Esophagus muscularis mucosa (tissue), 4 donors: ENCODE measurements at regions of chr6 and their contacts with region 1.

Region 1: DNA sequence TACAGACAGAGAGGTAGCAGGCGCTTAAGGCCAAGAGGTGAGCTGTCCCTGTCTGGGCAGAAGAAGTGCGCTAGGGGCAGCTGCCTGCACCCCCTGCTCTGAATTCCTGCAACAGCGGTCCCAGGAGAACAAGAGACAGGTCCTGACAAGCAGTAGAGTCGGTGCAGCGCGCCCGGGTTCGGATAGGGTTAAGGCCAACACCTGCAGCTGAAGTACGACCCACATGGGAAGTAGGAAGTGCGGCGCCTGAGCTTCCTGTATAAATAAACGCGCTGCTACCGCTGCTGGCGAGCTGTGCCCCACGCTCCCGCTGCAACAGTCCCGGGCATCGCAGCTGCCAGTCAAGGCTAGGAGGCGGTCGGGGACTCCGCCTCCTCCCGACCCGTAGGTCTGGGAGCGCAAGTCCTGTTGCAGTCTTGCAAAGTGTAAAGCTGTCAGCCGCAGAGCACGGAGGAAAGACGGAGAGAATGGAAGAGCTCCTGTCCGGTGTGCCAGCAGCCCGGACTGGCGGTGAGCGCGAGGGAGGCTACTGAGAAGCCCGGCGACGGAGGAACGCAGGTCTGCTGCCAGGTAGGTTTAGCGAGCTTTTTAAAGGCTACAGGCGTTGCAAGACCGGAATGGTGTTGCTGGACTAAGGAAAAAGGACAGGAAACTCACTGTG is at the start of gene RNF144B:
- DNase-seq: peak; percentile 95
- H3K4me3 ChIP-seq: peak within 1 kb of the TSS; percentile 53 to 73 (median 62)
- H3K27ac ChIP-seq: peak within 1 kb of the TSS; percentile 63 to 82 (median 72)
- H3K4me1 ChIP-seq: peaks cover 19 to 45% (median 42%) of the 10 kb centered on the region in 4 donors
- H3K27me3 ChIP-seq: no peaks in the 10 kb centered on the region
- CTCF ChIP-seq: no peak
- EP300 ChIP-seq: no peak
- POLR2A ChIP-seq: peak; percentile 30
- total RNA-seq, gene RNF144B: 6.6 to 20.0 (median 12.1) TPM

Region 2: GRCh38 chr6:18264219-18264922 is 122.8 kb before region 1 on chr6 and contains the start of gene DEK:
- intact Hi-C with region 1: loop called (anchors 5 kb)
- DNase-seq: peak; percentile 96
- H3K4me3 ChIP-seq: peak within 1 kb of the TSS; percentile 82 to 98 (median 94)
- H3K27ac ChIP-seq: peak within 1 kb of the TSS; percentile 96 to 99 (median 98)
- H3K4me1 ChIP-seq: peaks cover 33 to 42% (median 38%) of the 10 kb centered on the region in 4 donors
- H3K27me3 ChIP-seq: no peaks in the 10 kb centered on the region
- CTCF ChIP-seq: peak; percentile 44 to 76 (median 47)
- EP300 ChIP-seq: no peak
- POLR2A ChIP-seq: peak; percentile 14
- total RNA-seq, gene DEK: 134 to 189 (median 142) TPM

Region 3: GRCh38 chr6:18323935-18324705 is 63.1 kb before region 1 on chr6:
- intact Hi-C with region 1: loop called (anchors 10 kb)
- DNase-seq: no peak
- H3K4me3 ChIP-seq: no peak overlapping the region
- H3K27ac ChIP-seq: no peak overlapping the region
- H3K4me1 ChIP-seq: peaks cover 0 to 15% (median 10%) of the 10 kb centered on the region in 4 donors
- H3K27me3 ChIP-seq: no peaks in the 10 kb centered on the region
- CTCF ChIP-seq: peak; percentile 72 to 74 (median 73)
- EP300 ChIP-seq: no peak
- POLR2A ChIP-seq: no peak

Region 4: DNA sequence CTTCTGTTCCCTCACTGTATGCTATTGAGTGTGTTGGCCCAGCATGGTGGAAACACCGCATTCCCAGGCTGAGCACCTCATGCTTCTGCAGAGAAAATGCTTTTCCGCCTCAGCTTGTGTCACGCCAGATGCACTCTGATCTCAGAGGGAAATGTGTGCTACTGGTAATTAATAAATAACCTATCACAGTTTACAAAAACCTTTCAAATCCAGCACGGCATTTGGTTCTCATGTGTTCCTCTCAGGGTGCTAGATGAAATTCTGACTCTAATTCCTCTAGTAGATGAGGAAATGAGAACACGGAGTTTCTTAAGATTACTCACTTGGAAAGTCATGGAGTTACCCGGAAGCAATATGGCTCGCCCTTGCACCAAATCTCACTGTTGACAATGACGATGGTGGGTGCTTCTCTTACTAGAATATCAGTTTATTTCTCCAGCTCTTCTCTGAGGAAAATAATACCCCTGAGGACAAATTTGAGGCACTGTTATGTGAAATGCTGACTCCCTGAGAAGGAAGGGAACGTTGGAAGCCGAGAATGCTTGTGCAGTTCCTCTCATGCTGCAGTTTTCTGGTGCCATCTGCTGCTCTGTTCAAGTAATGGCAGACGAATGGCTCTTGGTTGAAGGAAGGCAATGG is 116.5 kb after region 1 on chr6:
- intact Hi-C with region 1: loop called (anchors 5 kb)
- DNase-seq: peak; percentile 92
- H3K4me3 ChIP-seq: peak overlapping the region; percentile 34 to 54 (median 42)
- H3K27ac ChIP-seq: peak overlapping the region in 3 of 4 donors; percentile 23 to 42 (median 34)
- H3K4me1 ChIP-seq: peaks cover 0 to 14% (median 6%) of the 10 kb centered on the region in 4 donors
- H3K27me3 ChIP-seq: no peaks in the 10 kb centered on the region
- CTCF ChIP-seq: peak; percentile 90 to 94 (median 90)
- EP300 ChIP-seq: no peak
- POLR2A ChIP-seq: no peak